H1 (cell line): ENCODE measurements at regions of chr5 and their contacts with region 1.

Region 1: GRCh38 chr5:41695920-41696582 is 174.2 kb downstream of the OXCT1 start:
- DNase-seq: no peak
- H3K4me3 ChIP-seq: no peak overlapping the region
- H3K27ac ChIP-seq: no peak overlapping the region
- H3K4me1 ChIP-seq: no peaks in the 10 kb centered on the region
- H3K27me3 ChIP-seq: no peaks in the 10 kb centered on the region
- CTCF ChIP-seq: peak in 1 of 3 experiments; percentile 45; a peak in 2 of 4 replicates
- EP300 ChIP-seq: no peak
- POLR2A ChIP-seq: no peak
- RAD21 ChIP-seq: peak; percentile 52 to 55

Region 2: GRCh38 chr5:41681840-41682239 is 14.2 kb before region 1 on chr5:
- CTCF ChIA-PET with region 1: interaction called, 16 read pairs
- POLR2A ChIA-PET with region 1: no interaction called
- DNase-seq: no peak
- H3K4me3 ChIP-seq: no peak overlapping the region
- H3K27ac ChIP-seq: no peak overlapping the region
- H3K4me1 ChIP-seq: no peaks in the 10 kb centered on the region
- H3K27me3 ChIP-seq: no peaks in the 10 kb centered on the region
- CTCF ChIP-seq: no peak
- EP300 ChIP-seq: no peak
- POLR2A ChIP-seq: no peak
- RAD21 ChIP-seq: no peak

Region 3: DNA sequence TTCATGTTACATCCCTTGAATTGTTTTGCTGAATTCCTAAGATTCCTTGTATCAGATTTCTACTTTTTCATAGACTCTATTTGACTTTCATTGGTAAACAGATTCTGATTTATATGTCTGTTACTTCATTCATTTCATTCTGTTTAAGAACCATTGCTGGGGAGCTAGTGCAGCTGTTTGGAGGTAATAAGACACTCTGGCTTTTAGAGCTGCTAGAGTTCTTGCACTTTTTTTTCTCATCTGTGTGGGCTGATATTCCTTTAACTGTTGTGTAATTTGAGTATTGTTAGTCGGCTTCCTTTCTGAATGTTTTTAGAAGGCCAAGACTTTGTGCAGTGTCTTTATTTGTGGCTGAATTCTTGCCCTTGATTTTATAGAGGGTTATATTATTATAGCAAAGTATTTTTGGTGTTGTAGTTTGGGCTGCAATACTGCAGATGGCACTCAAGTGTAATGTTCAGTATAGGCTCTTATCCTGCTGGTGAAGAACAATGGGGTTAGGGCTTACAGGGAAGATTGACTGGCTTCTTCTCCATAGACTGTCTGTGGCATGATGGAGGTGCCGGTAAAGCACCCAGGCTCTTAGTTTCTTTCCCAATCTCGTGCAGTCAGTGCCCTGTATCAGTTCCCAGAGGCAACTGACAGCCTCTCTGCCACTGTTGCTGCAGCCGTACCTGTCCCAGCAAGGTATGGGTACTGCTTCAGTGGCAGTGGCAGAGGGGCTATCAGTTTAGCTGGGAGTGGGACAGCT is 12.0 kb after region 1 on chr5:
- CTCF ChIA-PET with region 1: interaction called, 11 read pairs
- POLR2A ChIA-PET with region 1: no interaction called
- DNase-seq: peak in 1 of 2 experiments; percentile 59
- H3K4me3 ChIP-seq: no peak overlapping the region
- H3K27ac ChIP-seq: no peak overlapping the region
- H3K4me1 ChIP-seq: peaks cover 0 to 4% (median 0%) of the 10 kb centered on the region in 4 experiments; a peak in 2 of 7 replicates
- H3K27me3 ChIP-seq: no peaks in the 10 kb centered on the region
- CTCF ChIP-seq: peak in 2 of 3 experiments; percentile 49 to 59; a peak in 2 of 4 replicates
- EP300 ChIP-seq: no peak
- POLR2A ChIP-seq: no peak
- RAD21 ChIP-seq: peak; percentile 79 to 80